Right ventricle myocardium inferior (tissue), 1 donor: ENCODE measurements at regions of chr1 and their contacts with region 1.

Region 1: DNA sequence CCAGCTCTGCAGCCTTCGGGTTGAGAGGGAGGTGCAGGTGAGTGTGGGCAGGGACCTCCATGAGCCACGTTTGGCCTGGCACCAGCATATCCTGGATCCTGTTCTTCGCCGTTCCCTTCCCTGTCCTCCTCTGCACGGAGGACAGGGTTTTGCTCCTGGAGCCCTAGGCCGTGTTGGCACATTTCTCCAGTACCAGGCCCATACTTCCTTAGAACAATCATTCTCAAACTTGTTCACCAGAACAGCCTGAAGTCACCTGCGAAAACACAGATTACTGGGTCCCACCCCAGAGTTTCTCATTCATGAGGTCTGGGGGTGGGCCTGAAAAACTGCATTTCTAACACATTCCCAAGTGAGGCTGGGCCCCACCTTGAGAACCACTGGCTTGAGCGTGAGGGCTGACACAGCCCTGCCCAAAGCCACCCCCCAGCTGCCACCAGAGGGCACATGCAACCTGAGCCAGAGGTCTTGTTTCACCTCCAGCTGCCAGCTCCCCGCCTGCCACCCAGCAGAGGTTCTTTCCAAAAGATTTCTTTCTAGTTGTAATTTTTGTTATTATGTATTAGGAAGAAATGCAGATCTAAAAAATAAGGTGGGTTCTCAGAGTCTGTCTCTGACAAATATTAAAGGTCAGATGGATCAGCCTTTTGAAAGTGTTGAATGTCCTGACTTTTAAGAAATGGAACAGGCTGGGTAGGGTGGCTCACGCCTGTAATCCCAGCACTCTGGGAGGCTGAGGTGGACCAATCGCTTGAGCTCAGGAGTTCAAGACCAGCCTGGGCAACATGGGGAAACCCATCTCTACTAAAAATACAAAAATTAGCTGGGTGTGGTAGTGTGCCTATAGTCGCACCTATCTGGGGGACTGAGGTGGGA is 39.6 kb upstream of the LDLRAP1 start:
- DNase-seq: no peak
- ATAC-seq: peak; percentile 66

Region 2: DNA sequence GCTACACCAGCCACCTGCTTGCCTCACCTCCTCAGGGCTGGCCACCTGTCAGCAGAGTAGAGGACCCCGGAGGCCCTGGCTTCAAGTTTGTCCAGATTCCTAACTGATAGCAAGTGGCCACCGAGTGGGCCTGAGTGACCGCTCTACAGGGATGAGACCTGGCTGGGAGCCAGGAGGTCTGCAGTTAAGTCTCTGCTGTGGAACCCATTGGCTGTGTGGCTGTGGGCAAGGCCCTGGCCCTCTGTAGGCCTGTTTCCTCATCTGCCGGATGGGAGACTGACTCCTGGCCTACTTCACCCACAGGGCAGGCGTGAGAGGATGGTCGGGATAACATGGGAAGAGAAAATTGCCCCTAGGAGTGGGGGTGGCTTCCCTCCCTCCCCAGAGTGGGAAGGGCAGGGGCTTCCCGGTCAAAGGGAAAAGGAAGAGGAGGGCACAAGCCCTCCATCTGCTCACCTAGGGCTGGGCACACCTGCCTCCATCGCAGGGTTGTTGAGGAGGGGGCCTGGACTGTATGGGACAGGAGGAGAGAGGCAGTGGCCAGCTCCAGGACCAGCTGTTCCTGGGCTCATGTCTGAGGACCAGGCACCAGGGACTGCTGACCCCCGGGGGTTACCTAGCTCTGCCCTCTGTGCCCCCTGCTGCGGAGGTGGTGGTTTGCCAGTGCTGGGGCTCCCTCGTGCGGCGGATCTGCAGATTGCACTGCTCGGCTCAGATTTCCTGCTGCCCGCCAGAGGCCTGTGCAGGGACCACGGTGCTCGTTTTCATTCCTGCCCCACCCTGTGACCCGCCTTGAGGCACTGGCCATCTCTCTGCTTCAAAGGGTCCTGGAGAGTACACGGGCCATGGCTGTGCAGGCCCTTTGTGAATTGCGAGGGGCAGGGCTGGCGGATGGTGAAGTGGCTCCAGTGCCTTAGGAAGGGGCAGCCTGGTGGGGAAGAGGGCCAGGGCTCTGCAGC is 306.8 kb after region 1 on chr1:
- intact Hi-C with region 1: loop called (anchors 5 kb)
- DNase-seq: peak; percentile 90
- ATAC-seq: peak; percentile 58